ENCODE measurements at regions of chr7 and their contacts with region 1.

Region 1: DNA sequence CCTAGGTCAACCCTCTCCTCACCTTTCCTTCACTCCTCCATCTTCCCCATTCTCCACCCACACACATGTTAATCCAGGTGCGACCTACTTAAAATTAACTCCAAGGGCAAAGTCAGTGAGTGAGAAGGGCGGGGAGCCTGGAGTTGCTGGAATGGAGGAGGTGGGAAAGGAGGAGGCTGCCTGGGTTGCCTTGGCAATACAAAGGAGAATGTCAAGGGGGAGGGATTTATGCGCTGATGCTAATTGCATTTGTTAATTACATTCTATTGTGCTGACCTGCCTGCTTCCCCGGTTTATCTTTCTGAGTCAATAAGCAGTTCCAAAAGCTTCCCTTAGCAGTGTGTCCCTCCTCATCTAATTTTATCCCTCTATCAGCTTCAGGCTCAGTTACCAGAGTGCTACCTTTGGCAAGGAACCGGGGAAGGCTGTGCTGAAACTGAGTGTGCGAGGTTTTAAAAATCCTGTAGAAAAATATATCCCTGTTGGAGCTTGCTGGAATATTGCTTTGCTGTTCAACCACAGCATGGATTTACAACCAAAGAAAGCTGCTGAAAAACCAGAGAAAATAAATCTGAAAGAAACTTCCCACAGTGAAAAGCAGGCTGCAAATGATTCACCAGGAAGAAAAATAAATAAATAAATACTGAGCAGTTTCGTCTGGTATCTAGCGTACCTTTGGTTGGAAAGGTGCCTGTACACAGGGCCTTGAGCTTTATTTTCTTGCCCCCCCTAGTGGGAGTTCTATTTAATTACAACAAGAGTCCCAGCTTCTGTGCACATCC is 113.2 kb upstream of the DGKB start:
- DNase-seq: no peak
- H3K4me3 ChIP-seq: peak overlapping the region in 1 of 2 donors; percentile 16
- H3K27ac ChIP-seq: no peak overlapping the region
- H3K4me1 ChIP-seq: peaks cover 0 to 4% of the 10 kb centered on the region in 2 donors
- H3K27me3 ChIP-seq: no peaks in the 10 kb centered on the region
- CTCF ChIP-seq: peak in 2 of 3 experiments; percentile 42 to 57

Region 2: GRCh38 chr7:14717816-14718215 is 297.9 kb before region 1 on chr7:
- intact Hi-C with region 1: loop called (anchors 5 kb)
- DNase-seq: no peak
- H3K4me3 ChIP-seq: no peak overlapping the region
- H3K27ac ChIP-seq: no peak overlapping the region
- H3K4me1 ChIP-seq: no peaks in the 10 kb centered on the region
- H3K27me3 ChIP-seq: no peaks in the 10 kb centered on the region
- CTCF ChIP-seq: peak in 2 of 3 experiments; percentile 20 to 35

Region 3: GRCh38 chr7:15214976-15215375 is 199.2 kb after region 1 on chr7:
- intact Hi-C with region 1: no loop called
- DNase-seq: no peak
- H3K4me3 ChIP-seq: no peak overlapping the region
- H3K27ac ChIP-seq: no peak overlapping the region
- H3K4me1 ChIP-seq: no peaks in the 10 kb centered on the region
- H3K27me3 ChIP-seq: no peaks in the 10 kb centered on the region
- CTCF ChIP-seq: no peak

Measured in ascending aorta (tissue), 2 donors.